Activated CD4-positive, alpha-beta memory T cell treated with anti-CD3 and anti-CD28 coated beads, Interleukin-2, amount 10 ng/mL, durations not matched to agents 7 days and 5 days (primary cell): ENCODE measurements at regions of chr9 and their contacts with region 1.

Region 1: GRCh38 chr9:129131300-129132145 is 20.3 kb downstream of the PTPA start:
- DNase-seq: peak; percentile 86
- H3K4me3 Mint-ChIP-seq: no peak overlapping the region
- H3K27ac Mint-ChIP-seq: no peak overlapping the region
- H3K4me1 Mint-ChIP-seq: peaks cover 8% of the 10 kb centered on the region
- H3K27me3 Mint-ChIP-seq: no peaks in the 10 kb centered on the region

Region 2: GRCh38 chr9:128702445-128702948 is 429.0 kb before region 1 on chr9 and contains the start of gene PKN3:
- CTCF ChIA-PET with region 1: no interaction called
- POLR2A ChIA-PET with region 1: no interaction called
- DNase-seq: peak; percentile 88
- H3K4me3 Mint-ChIP-seq: peak within 1 kb of the TSS; percentile 82
- H3K27ac Mint-ChIP-seq: peak within 1 kb of the TSS; percentile 3
- H3K4me1 Mint-ChIP-seq: peaks cover 13% of the 10 kb centered on the region
- H3K27me3 Mint-ChIP-seq: no peaks in the 10 kb centered on the region
- total RNA-seq, gene PKN3: 5.0 to 5.6 TPM

Region 3: GRCh38 chr9:129080602-129081387 is 50.7 kb before region 1 on chr9 and contains the start of gene DOLPP1:
- CTCF ChIA-PET with region 1: interaction called, 11 read pairs
- POLR2A ChIA-PET with region 1: interaction called, 3 read pairs
- DNase-seq: peak; percentile 99
- H3K4me3 Mint-ChIP-seq: peak within 1 kb of the TSS; percentile 87
- H3K27ac Mint-ChIP-seq: peak within 1 kb of the TSS; percentile 76
- H3K4me1 Mint-ChIP-seq: peaks cover 28% of the 10 kb centered on the region
- H3K27me3 Mint-ChIP-seq: no peaks in the 10 kb centered on the region
- total RNA-seq, gene DOLPP1: 12.9 to 16.3 TPM

Region 4: DNA sequence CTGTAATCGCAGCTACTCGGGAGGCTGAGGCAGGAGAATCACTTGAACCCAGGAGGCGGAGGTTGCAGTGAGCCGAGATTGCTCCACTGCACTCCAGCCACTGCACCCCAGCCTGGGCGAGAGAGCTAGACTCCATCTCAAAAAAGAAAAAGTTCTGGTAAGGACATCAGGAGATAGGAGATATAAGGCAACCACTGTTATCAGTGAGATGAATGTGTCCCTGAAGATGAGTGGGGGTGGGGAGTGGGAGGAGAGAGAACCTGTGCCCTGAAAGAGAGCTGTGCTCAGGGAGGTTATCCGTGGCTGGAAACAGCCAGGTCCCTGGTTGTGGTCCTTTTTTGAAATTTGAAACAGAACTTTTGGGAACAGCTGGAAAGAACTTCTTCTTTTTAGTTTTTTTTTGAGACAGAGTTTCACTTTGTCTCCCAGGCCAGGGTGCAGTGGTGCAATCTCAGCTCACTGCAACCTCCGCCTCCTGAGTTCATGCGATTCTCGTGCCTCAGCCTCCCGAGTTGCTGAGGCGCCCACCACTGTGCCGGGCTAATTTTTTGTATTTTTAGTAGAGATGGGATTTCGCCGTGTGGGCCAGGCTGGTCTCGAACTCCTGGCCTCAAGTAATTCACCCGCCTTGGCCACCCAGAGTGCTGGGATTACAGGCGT is 17.7 kb before region 1 on chr9:
- CTCF ChIA-PET with region 1: interaction called, 33 read pairs
- POLR2A ChIA-PET with region 1: interaction called, 6 read pairs
- DNase-seq: no peak
- H3K4me3 Mint-ChIP-seq: no peak overlapping the region
- H3K27ac Mint-ChIP-seq: no peak overlapping the region
- H3K4me1 Mint-ChIP-seq: peaks cover 34% of the 10 kb centered on the region
- H3K27me3 Mint-ChIP-seq: no peaks in the 10 kb centered on the region

Region 5: GRCh38 chr9:129121483-129121882 is 10.0 kb before region 1 on chr9:
- CTCF ChIA-PET with region 1: interaction called, 33 read pairs
- POLR2A ChIA-PET with region 1: interaction called, 5 read pairs
- DNase-seq: no peak
- H3K4me3 Mint-ChIP-seq: no peak overlapping the region
- H3K27ac Mint-ChIP-seq: no peak overlapping the region
- H3K4me1 Mint-ChIP-seq: no peaks in the 10 kb centered on the region
- H3K27me3 Mint-ChIP-seq: no peaks in the 10 kb centered on the region

Region 6: GRCh38 chr9:129177791-129178559 is 46.5 kb after region 1 on chr9 and contains the start of gene IER5L:
- CTCF ChIA-PET with region 1: interaction called, 12 read pairs
- POLR2A ChIA-PET with region 1: interaction called, 5 read pairs
- DNase-seq: peak; percentile 94
- H3K4me3 Mint-ChIP-seq: peak within 1 kb of the TSS; percentile 84
- H3K27ac Mint-ChIP-seq: peak within 1 kb of the TSS; percentile 45
- H3K4me1 Mint-ChIP-seq: peaks cover 15% of the 10 kb centered on the region
- H3K27me3 Mint-ChIP-seq: peaks cover 19% of the 10 kb centered on the region
- total RNA-seq, gene IER5L: 2.4 to 3.0 TPM

Region 7: DNA sequence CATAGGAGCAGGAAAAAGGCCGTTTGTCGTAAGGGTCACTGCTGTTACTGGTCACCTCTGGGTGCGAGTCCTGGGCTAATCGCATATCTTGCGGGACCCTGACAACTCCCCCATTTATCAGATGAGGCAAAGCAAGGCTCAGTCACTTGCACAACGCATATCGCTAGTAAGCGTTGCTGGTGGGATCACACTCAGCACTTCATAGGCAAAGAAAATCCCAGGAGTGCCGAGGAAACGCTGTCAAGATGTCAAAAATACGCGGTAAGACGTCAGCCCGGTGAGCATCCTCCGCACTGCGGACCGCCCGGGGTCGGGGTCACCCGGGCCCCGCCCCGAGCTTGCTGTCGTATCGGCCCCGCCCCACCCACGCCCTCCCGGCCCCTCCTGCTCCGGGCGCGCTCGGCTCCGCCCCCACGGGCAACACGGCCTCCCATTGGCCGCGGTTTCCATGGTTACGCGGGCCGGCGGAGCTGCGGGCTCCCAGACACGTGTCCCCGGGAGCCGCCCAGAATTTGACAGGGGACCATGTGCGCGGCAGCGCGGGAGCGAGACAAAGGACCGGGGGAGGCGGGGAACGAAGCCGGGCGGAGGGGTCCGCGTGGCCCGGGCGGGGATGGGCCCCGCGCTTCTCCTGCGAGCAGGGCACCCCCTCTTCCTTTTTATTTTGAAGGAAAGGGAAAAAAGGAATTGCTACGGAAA is 126.8 kb after region 1 on chr9:
- CTCF ChIA-PET with region 1: no interaction called
- POLR2A ChIA-PET with region 1: no interaction called
- DNase-seq: peak; percentile 90
- H3K4me3 Mint-ChIP-seq: peak overlapping the region; percentile 19
- H3K27ac Mint-ChIP-seq: no peak overlapping the region
- H3K4me1 Mint-ChIP-seq: peaks cover 36% of the 10 kb centered on the region
- H3K27me3 Mint-ChIP-seq: peaks cover 51% of the 10 kb centered on the region

Region 8: GRCh38 chr9:129610473-129611301 is 479.2 kb after region 1 on chr9:
- CTCF ChIA-PET with region 1: interaction called, 17 read pairs
- POLR2A ChIA-PET with region 1: interaction called, 4 read pairs
- DNase-seq: peak; percentile 74
- H3K4me3 Mint-ChIP-seq: peak overlapping the region; percentile 64
- H3K27ac Mint-ChIP-seq: peak overlapping the region; percentile 40
- H3K4me1 Mint-ChIP-seq: peaks cover 42% of the 10 kb centered on the region
- H3K27me3 Mint-ChIP-seq: no peaks in the 10 kb centered on the region

Region 9: DNA sequence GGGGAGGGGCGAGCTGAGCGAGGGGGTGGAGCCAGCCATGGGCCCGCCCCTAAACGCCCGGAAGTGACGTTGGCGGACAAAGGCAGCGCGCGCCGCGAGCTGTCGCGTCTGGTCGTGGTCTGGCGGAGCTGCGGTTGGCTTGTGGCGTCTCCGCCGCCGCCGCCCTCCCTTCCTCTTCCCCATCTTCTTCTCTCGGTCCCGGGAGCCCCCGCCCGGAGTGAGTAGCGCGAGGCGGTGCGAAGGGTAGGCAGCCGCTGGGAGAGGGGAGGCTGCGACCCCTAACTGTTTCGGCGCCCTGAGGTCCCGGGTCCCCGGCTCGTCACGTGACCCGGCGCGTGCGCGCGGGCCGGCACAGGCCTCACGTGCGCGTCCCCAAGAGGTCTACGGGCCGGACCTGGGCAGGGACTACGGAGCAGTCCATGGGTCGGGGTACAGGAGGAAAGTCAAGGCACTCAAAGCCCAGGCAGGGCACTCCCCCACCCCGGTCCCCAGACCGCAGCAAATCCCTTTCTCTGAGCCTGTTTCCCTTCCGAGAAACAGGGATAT is 494.6 kb after region 1 on chr9 and contains the start of gene NTMT1:
- CTCF ChIA-PET with region 1: interaction called, 112 read pairs
- POLR2A ChIA-PET with region 1: interaction called, 4 read pairs
- DNase-seq: peak; percentile 93
- H3K4me3 Mint-ChIP-seq: peak within 1 kb of the TSS; percentile 81
- H3K27ac Mint-ChIP-seq: peak within 1 kb of the TSS; percentile 88
- H3K4me1 Mint-ChIP-seq: peaks cover 56% of the 10 kb centered on the region
- H3K27me3 Mint-ChIP-seq: peaks cover 8% of the 10 kb centered on the region
- total RNA-seq, gene NTMT1: 34.2 to 38.7 TPM